Transverse colon (tissue), 4 donors: ENCODE measurements at regions of chr12 and their contacts with region 1.

Region 1: GRCh38 chr12:55172686-55173085 is 46.5 kb downstream of the OR9K2 start:
- DNase-seq: no peak
- H3K4me3 ChIP-seq: no peak overlapping the region
- H3K27ac ChIP-seq: no peak overlapping the region
- H3K4me1 ChIP-seq: no peaks in the 10 kb centered on the region
- H3K27me3 ChIP-seq: no peaks in the 10 kb centered on the region
- CTCF ChIP-seq: no peak
- EP300 ChIP-seq: no peak
- POLR2A ChIP-seq: no peak

Region 2: GRCh38 chr12:54032627-54033100 is 1140.0 kb before region 1 on chr12 and contains the start of gene HOXC5:
- in situ Hi-C with region 1: no loop called
- intact Hi-C with region 1: loop called (anchors 5 kb)
- DNase-seq: peak; percentile 65
- H3K4me3 ChIP-seq: peak within 1 kb of the TSS; percentile 3 to 37 (median 14)
- H3K27ac ChIP-seq: peak within 1 kb of the TSS in 3 of 4 donors; percentile 2 to 57 (median 14)
- H3K4me1 ChIP-seq: peaks cover 7 to 29% (median 22%) of the 10 kb centered on the region in 4 donors
- H3K27me3 ChIP-seq: peaks cover 100% of the 10 kb centered on the region
- CTCF ChIP-seq: peak; percentile 89 to 95 (median 91)
- EP300 ChIP-seq: no peak
- POLR2A ChIP-seq: no peak
- total RNA-seq, gene HOXC5: 0.27 to 0.60 TPM in 2 of 4 donors, not detected in the others

Region 3: DNA sequence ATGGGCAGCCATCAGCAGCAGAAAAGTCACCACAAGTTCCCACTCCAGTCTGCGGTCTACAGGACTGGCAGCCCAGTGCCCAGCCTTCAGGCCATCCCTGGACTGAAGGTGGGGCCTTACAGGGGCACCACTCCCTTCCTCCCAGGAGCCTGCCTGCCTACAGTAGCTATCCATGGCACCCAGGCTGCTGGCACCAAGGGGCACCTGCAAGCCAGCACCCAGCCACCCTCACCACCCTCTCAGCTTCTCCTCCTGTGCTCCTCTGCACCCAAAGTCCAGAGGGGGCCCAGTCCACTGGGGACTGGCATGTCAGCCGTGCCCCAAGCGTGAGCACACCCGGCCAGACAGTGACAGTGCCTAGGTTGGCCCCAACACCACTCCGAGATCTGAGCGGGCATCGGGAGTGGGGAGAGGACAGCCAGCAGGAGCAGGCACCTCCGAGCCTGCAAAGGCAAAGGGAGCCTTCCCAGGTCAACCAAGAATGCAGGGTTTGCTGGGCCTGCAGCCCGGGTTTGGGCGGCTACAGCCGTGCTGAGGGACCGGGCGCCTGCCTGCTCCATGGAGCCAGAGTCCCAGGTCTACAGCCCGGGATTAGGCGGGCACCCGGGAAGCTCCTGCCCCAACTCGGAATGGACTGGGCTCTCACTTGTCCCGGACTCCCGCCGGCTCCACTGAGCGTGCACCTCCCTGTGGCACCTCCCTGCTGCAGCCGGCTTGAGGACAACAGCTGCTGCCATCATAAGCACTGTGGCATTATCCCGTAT is 219.5 kb after region 1 on chr12:
- in situ Hi-C with region 1: no loop called
- intact Hi-C with region 1: no loop called
- DNase-seq: no peak
- H3K4me3 ChIP-seq: no peak overlapping the region
- H3K27ac ChIP-seq: no peak overlapping the region
- H3K4me1 ChIP-seq: no peaks in the 10 kb centered on the region
- H3K27me3 ChIP-seq: no peaks in the 10 kb centered on the region
- CTCF ChIP-seq: no peak
- EP300 ChIP-seq: no peak
- POLR2A ChIP-seq: no peak